ENCODE measurements at regions of chr1 and their contacts with region 1.

Region 1: DNA sequence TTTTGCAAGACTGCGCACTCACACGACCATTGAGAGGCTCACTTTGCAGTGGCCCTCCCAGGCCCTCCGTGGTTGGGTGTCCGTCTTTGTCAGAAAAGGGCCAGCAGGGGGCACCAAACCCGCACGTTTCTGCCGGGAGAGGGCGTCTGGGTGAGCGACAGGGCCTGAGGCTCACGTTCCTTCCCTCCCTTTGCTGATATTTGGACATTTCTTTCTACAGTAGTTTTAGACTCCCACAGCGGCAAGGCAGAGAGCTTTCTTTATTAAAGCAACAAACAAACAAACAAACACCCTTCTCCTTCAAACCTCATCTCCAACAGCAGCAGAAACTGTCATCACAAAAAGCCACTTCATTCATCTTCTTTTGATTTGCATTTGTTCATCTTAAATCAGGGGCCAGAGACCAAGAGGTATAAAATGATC is 79.2 kb upstream of the WDR26 start:
- DNase-seq: peak; percentile 88
- H3K4me3 Mint-ChIP-seq: no peak overlapping the region
- H3K27ac Mint-ChIP-seq: no peak overlapping the region
- H3K4me1 Mint-ChIP-seq: peaks cover 25% of the 10 kb centered on the region
- H3K27me3 Mint-ChIP-seq: no peaks in the 10 kb centered on the region

Region 2: DNA sequence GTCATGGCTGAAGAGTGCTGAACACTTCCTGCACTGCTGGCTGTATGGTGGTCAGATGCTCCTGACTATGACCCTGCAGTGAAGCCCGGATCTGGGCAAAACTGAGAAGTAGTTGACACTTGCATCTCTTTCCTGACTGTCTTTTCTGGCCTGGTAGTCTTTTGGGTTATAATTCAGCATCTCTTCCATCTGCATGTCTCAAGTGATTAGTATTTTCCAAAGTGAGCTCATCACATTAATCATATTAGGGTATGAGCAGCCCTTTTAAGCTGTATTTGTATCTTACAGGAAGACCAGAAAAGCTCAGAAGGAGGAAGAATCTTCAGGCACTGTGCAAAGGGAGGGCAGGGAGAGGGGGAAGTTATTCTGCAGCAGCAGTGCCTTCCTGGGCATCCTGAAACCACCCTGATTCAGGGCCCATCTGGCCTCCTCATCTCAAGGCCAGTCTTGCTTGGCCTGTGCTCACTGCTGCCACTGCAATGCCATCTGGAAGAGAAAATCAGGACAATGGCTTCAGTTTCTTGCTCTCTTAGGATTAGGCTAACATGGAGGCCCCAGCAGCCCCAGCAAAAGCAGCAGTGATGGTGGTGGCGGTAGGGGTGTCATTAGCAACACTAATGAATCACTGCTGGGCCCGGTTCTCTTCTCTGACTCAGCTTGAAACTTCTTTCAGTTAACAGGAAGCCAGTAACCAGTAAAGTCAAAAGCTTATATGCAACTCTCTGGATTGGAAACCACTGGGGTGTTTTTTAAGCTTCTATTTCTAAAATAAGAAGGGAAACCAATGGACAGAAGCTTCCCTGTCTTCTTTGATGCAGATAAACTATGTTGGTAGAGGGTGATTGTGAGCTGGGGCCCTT is 15.9 kb before region 1 on chr1:
- CTCF ChIA-PET with region 1: interaction called, 21 read pairs
- POLR2A ChIA-PET with region 1: no interaction called
- DNase-seq: peak; percentile 72
- H3K4me3 Mint-ChIP-seq: peak overlapping the region; percentile 20
- H3K27ac Mint-ChIP-seq: peak overlapping the region; percentile 91
- H3K4me1 Mint-ChIP-seq: peaks cover 67% of the 10 kb centered on the region
- H3K27me3 Mint-ChIP-seq: no peaks in the 10 kb centered on the region

Region 3: GRCh38 chr1:224503161-224504118 is 10.4 kb before region 1 on chr1:
- CTCF ChIA-PET with region 1: interaction called, 21 read pairs
- POLR2A ChIA-PET with region 1: no interaction called
- DNase-seq: no peak
- H3K4me3 Mint-ChIP-seq: no peak overlapping the region
- H3K27ac Mint-ChIP-seq: peak overlapping the region; percentile 52
- H3K4me1 Mint-ChIP-seq: peaks cover 56% of the 10 kb centered on the region
- H3K27me3 Mint-ChIP-seq: no peaks in the 10 kb centered on the region

Region 4: DNA sequence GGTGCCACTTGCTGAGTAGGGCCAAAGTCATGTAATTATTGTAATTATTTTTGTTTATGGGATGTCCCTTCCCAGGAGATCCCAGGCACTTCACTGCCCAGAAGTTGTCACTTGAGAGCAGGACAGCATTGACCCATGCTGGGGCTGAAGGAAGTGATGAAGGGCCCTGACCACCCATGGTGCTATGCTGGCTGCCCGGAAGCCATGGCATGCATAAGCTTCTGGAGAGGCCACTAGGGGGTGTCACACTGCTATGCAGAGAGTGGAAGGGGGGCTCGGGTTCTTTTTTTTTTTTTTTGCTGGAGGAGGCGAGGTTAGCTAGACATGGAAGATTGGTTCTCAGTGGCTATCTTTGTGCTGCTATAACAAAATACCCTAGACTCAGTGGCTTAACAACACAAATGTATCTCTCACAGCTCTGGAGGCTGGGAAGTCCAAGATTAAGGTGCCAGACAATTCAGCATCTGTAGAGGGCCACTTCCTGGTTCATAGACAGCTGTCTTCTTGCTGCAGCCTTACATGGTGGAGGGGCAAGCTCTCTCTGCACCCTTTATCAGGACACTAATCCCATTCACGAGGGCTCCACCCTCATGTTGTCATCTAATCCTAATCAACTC is 187.2 kb after region 1 on chr1:
- CTCF ChIA-PET with region 1: no interaction called
- POLR2A ChIA-PET with region 1: no interaction called
- DNase-seq: no peak
- H3K4me3 Mint-ChIP-seq: no peak overlapping the region
- H3K27ac Mint-ChIP-seq: no peak overlapping the region
- H3K4me1 Mint-ChIP-seq: no peaks in the 10 kb centered on the region
- H3K27me3 Mint-ChIP-seq: peaks cover 2% of the 10 kb centered on the region

Region 5: DNA sequence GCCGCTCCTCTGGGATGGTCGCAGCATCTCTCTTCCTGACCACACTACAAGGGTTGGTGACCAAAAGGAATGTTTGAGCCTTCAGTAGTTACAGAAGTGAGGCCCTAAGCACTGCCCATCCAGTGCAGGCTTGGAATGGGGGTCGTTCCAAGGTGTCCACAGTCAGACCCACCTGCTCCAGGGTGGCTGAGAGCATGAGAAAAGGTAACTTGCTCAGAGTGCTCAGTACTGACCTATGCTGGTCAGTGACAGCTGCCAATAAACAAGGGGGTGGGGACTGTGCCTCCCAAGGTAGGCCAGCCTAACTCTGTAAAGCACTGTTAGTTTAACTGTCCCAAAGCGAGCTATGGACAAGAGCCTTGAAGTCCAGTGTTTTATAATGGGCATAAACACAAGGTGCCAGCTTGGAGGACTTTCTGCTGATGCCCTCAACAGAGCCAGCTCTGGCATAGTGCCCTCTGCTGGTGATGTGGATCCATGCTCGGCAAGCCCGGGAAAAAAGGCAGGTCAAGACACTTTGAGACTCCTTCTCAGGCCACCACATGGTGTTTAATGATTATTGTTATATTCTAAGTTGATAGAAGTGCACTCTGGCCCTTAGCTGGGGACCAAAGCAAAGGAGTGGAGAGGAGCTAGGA is 337.5 kb after region 1 on chr1:
- CTCF ChIA-PET with region 1: interaction called, 18 read pairs
- POLR2A ChIA-PET with region 1: no interaction called
- DNase-seq: peak; percentile 66
- H3K4me3 Mint-ChIP-seq: no peak overlapping the region
- H3K27ac Mint-ChIP-seq: no peak overlapping the region
- H3K4me1 Mint-ChIP-seq: no peaks in the 10 kb centered on the region
- H3K27me3 Mint-ChIP-seq: peaks cover 2% of the 10 kb centered on the region

Measured in activated CD4-positive, alpha-beta T cell treated with anti-CD3 and anti-CD28 coated beads, Interleukin-2, amount 10 ng/mL, durations not matched to agents 7 days and 5 days (primary cell).